IMR-90 (cell line): ENCODE measurements at regions of chr9 and their contacts with region 1.

Region 1: DNA sequence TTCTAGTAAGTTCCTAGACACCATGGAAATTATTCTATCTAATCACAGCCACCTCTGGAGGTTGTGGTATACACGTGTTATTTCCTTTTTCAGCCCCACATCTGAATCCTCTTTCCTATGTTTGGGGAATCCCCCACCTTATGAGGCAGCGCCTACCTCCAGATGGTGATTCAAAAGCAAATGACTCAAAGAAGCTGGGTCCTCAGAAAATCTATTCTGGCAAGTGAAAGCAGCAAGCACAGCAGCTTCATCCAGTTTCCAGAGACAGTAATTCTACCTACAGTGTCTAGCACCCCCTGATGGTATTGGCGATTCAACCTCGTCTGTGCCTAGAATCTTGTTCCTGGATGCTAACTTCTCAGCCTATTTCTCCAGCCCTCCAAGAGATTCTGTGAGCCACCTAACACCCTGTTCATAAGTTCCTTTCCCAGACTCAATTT is 43.0 kb downstream of the STRBP start:
- DNase-seq: peak; percentile 90
- ATAC-seq: peak; percentile 95
- H3K4me3 ChIP-seq: no peak overlapping the region
- H3K27ac ChIP-seq: no peak overlapping the region
- H3K4me1 ChIP-seq: no peaks in the 10 kb centered on the region
- H3K27me3 ChIP-seq: no peaks in the 10 kb centered on the region
- CTCF ChIP-seq: peak; percentile 69
- POLR2A ChIP-seq: no peak
- RAD21 ChIP-seq: peak; percentile 76

Region 2: DNA sequence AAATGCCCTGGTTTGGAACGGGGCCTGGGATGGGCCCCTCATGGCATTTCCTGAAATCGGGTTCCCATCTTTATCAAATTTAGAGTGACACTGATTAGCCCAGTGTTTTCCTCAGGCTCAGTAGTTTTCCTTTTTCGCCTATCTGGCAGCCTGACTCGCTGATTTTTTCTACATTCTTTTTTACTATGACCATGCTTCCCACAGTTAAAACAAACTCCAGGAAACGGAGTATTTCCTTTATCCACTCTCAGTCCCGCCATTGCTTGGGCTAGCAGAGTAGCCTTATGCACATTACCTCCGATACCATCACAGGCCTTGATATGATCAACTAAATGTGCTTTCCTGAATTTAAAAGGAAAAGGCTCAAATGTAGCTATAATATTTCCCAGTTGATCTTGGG is 605.4 kb before region 1 on chr9:
- CTCF ChIA-PET with region 1: no interaction called
- POLR2A ChIA-PET with region 1: no interaction called
- dilution Hi-C with region 1: no loop called
- in situ Hi-C with region 1: no loop called
- intact Hi-C with region 1: no loop called
- DNase-seq: no peak
- ATAC-seq: no peak
- H3K4me3 ChIP-seq: no peak overlapping the region
- H3K27ac ChIP-seq: no peak overlapping the region
- H3K4me1 ChIP-seq: no peaks in the 10 kb centered on the region
- H3K27me3 ChIP-seq: no peaks in the 10 kb centered on the region
- CTCF ChIP-seq: no peak
- POLR2A ChIP-seq: no peak
- RAD21 ChIP-seq: no peak

Region 3: DNA sequence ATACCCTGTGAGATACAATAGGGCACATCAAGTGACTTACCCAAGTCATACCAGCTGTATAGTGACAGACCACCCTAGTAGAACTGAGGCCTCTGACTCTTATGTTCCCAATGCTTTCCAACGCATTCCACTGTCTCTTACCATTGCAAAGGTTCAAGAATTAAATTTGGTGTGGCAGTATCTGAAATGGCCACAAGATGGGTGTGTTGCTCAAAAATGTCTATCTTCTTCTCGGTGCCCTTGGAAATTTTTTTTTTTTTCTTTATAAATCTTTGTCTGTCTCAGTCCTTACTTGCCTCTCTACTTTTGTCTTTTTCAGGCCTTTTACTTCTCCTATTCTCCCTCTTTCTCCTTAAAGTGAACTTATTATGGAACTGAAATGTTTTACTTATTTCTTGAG is 143.6 kb before region 1 on chr9:
- CTCF ChIA-PET with region 1: interaction called, 7 read pairs
- POLR2A ChIA-PET with region 1: no interaction called
- dilution Hi-C with region 1: no loop called
- in situ Hi-C with region 1: no loop called
- intact Hi-C with region 1: loop called (anchors 1 kb)
- DNase-seq: peak; percentile 55
- ATAC-seq: peak; percentile 92
- H3K4me3 ChIP-seq: no peak overlapping the region
- H3K27ac ChIP-seq: no peak overlapping the region
- H3K4me1 ChIP-seq: no peaks in the 10 kb centered on the region; the same call in 1 of the 2 replicates
- H3K27me3 ChIP-seq: no peaks in the 10 kb centered on the region
- CTCF ChIP-seq: peak; percentile 73
- POLR2A ChIP-seq: no peak
- RAD21 ChIP-seq: peak; percentile 71

Region 4: DNA sequence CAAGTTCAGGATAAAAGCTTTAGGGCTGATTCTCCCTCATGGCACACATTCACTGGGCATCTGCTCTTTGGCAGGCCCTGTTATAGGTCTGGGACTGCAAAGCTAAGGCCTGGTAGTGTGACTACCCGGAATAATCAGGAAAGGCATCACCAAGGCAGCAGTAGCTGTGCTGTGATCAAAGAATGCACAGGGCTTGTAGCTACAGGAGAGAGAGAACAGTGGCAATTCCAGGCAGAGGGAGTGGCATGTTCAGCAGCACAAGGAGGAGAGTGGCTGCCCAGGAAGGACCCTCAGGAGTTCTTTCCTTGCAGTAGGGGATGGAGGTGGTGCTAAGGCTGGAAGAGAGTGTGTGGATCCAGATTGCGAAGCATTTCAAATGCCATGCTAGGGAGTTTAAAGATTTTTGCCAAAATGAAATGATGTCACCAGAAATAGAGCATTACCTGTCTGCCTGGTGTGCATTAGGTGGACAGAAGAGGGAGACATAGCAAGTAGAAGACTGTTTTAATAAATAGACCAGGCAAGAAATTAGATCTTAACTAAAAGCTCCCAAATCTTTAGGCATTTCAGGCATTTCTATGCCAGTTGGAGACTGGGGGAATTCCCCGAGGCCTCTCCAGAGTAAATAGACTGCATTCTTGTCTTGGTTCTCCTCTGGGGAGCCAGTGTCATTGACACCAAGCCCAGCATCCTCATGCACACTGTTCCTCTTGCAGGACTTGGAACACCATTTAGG is 122.9 kb before region 1 on chr9:
- CTCF ChIA-PET with region 1: interaction called, 5 read pairs
- POLR2A ChIA-PET with region 1: no interaction called
- dilution Hi-C with region 1: no loop called
- in situ Hi-C with region 1: no loop called
- intact Hi-C with region 1: loop called (anchors 1 kb)
- DNase-seq: peak; percentile 40
- ATAC-seq: peak; percentile 88
- H3K4me3 ChIP-seq: no peak overlapping the region
- H3K27ac ChIP-seq: no peak overlapping the region
- H3K4me1 ChIP-seq: peaks cover 7% of the 10 kb centered on the region; the same call in 1 of the 2 replicates
- H3K27me3 ChIP-seq: no peaks in the 10 kb centered on the region
- CTCF ChIP-seq: peak; percentile 47
- POLR2A ChIP-seq: no peak
- RAD21 ChIP-seq: peak; percentile 44

Region 5: DNA sequence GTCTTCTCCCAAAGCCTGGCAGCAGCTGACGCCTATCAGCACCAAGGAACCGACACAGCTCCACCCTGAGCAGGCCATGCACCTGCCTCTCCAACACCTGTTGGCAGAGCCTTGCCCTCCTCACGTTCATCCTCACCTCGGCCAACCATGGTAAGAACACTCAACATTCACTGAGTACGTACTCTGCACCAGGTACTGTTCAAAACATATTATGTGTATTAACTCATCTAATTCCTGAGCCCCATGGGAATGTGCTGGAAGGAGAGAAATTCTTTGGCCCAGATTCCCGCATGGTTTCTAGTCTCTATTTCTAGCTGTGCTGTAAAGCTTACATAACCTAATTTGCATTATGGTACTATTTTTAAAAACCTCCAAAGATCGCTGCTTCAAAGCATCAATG is 105.8 kb before region 1 on chr9:
- CTCF ChIA-PET with region 1: no interaction called
- POLR2A ChIA-PET with region 1: interaction called, 10 read pairs
- dilution Hi-C with region 1: no loop called
- in situ Hi-C with region 1: no loop called
- intact Hi-C with region 1: no loop called
- DNase-seq: no peak
- ATAC-seq: no peak
- H3K4me3 ChIP-seq: no peak overlapping the region
- H3K27ac ChIP-seq: no peak overlapping the region
- H3K4me1 ChIP-seq: peaks cover 2% of the 10 kb centered on the region; the same call in 1 of the 2 replicates
- H3K27me3 ChIP-seq: no peaks in the 10 kb centered on the region
- CTCF ChIP-seq: no peak
- POLR2A ChIP-seq: no peak
- RAD21 ChIP-seq: no peak

Region 6: GRCh38 chr9:123157216-123157615 is 68.2 kb before region 1 on chr9:
- CTCF ChIA-PET with region 1: no interaction called
- POLR2A ChIA-PET with region 1: no interaction called
- dilution Hi-C with region 1: no loop called
- in situ Hi-C with region 1: no loop called
- intact Hi-C with region 1: no loop called
- DNase-seq: peak; percentile 50
- ATAC-seq: no peak; the same call in 1 of the 2 replicates
- H3K4me3 ChIP-seq: no peak overlapping the region
- H3K27ac ChIP-seq: no peak overlapping the region
- H3K4me1 ChIP-seq: peaks cover 1% of the 10 kb centered on the region
- H3K27me3 ChIP-seq: no peaks in the 10 kb centered on the region; the same call in 1 of the 2 replicates
- CTCF ChIP-seq: no peak
- POLR2A ChIP-seq: no peak
- RAD21 ChIP-seq: no peak

Region 7: DNA sequence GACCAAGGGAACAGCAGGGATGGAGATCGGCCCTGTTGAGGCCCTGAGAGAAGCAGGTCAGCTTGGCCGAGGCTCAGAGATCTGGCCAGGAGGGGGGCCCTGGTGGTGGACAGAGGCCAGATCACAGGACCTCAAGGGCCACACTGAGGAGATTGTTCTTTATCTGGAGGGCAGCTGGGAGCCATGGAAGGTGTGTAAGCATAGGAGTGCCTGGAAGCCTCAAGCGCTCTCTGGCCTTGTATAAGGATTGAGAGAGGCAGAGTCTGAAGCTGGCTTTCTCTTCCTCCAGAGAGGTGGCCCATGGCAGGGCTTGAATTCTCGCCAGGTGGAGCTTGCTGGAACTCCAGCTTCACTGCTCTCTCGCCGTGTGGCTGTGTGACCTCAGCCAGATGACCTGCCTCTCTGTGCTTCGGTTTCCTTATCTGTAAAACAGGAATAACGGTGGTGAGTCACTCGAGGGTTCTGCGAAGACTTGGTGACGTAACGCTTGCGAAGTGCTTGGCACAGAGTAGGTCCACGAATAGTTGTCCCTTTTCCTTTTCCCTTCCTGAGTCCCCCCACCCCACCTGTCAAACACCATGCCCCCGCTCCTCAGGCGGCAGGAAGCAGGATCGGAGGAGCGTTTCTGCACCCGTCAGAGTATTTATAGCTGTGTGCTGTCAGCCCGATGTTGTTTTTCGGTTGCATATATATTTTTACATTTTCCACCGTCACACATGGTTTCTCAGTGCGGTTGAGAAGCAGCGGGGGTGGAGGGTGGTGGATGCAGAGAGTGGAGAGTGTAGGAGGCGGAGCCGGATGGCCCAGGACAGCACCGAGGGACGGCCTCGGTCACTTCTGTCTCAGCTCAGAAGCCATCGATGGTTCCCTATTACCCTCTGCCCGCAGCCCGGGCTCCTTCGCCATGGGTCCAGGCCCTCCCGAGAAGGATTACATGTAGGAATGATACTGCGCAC is 113.6 kb after region 1 on chr9:
- CTCF ChIA-PET with region 1: no interaction called
- POLR2A ChIA-PET with region 1: no interaction called
- dilution Hi-C with region 1: no loop called
- in situ Hi-C with region 1: no loop called
- intact Hi-C with region 1: loop called (anchors 2 kb)
- DNase-seq: no peak
- ATAC-seq: no peak
- H3K4me3 ChIP-seq: no peak overlapping the region
- H3K27ac ChIP-seq: no peak overlapping the region
- H3K4me1 ChIP-seq: peaks cover 4% of the 10 kb centered on the region; the same call in 1 of the 2 replicates
- H3K27me3 ChIP-seq: peaks cover 6% of the 10 kb centered on the region
- CTCF ChIP-seq: no peak
- POLR2A ChIP-seq: no peak
- RAD21 ChIP-seq: no peak

Region 8: DNA sequence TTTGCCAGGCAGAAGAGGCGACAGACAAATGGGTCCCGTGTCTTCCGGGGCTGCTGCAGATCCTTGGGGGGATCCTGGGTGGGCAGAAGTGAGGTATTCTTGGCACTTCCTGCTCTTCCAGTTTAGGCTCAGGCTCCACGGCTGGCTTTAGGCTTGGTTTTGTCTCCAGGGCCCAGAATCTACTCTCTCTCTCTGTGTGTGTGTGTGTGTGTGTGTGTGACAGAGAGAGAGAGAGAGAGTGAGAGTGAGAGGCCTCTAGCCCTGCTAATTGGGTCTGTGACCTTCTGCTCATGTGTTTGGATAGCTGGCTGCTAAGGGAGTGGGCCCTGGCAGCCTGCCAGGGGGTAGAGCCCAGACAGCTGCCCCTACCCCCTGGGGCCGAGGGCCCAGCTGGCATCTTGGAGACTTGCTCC is 169.9 kb after region 1 on chr9:
- CTCF ChIA-PET with region 1: no interaction called
- POLR2A ChIA-PET with region 1: no interaction called
- dilution Hi-C with region 1: no loop called
- in situ Hi-C with region 1: no loop called
- intact Hi-C with region 1: no loop called
- DNase-seq: no peak
- ATAC-seq: peak; percentile 44; the same call in 1 of the 2 replicates
- H3K4me3 ChIP-seq: no peak overlapping the region
- H3K27ac ChIP-seq: no peak overlapping the region
- H3K4me1 ChIP-seq: no peaks in the 10 kb centered on the region
- H3K27me3 ChIP-seq: no peaks in the 10 kb centered on the region; the same call in 1 of the 2 replicates
- CTCF ChIP-seq: no peak
- POLR2A ChIP-seq: no peak
- RAD21 ChIP-seq: no peak

Region 9: DNA sequence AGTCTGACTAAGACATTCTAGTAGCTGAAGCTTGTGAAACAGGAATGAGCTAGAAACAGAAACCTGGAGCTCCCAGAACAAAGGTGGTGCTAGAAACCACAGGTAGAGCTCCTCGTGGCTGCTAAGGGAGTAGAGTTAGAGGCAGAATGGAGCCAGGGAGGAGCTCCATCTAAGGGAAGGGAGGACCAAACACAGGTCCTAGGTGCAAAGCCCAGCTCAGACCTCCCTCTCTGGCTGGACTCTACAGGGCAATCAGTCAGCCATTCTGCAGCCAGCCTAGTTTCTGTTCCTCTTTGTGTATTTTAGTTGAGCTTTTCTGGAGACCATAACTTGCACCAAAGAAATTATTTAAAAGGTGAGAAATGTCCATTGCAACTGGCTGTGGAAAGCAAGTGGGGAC is 201.0 kb after region 1 on chr9:
- CTCF ChIA-PET with region 1: no interaction called
- POLR2A ChIA-PET with region 1: no interaction called
- dilution Hi-C with region 1: no loop called
- in situ Hi-C with region 1: no loop called
- intact Hi-C with region 1: no loop called
- DNase-seq: no peak
- ATAC-seq: no peak
- H3K4me3 ChIP-seq: no peak overlapping the region
- H3K27ac ChIP-seq: no peak overlapping the region
- H3K4me1 ChIP-seq: no peaks in the 10 kb centered on the region
- H3K27me3 ChIP-seq: no peaks in the 10 kb centered on the region
- CTCF ChIP-seq: no peak
- POLR2A ChIP-seq: no peak
- RAD21 ChIP-seq: no peak